ENCODE measurements at regions of chr21 and their contacts with region 1.

Region 1: DNA sequence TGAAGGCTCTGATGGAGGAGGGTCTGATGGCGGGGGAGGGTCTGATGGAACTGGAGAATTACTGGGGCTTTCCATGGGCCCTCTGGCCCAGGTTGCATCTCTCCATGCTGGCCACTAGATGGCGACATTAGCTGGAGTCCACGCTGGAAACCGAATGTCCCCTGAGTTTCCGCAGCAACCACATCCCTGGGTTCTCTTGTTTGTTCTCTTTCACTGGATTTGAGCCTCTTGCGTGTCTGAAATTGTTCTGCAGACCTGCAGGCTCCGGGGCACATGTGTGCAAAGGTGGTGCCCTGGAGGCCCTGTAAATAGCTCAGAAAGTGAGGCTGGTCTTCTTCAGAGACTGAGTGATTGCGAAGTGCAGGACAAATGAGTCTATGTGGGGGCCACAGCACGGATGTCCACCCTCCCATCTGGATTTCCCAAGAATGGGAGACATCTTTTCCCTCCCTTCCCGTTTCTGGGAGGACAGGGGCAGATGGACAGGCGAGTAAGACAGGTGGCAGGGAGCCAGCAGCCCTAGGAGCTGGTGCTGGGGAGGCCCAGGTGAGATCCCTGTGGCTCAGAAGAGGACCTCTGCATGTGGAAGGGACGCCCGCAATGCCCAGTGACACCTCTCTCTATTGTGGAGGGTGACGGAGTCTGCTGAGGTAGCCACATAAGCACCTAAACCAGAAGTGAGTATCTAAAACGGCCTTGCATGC is 73.2 kb upstream of the ABCG1 start:
- DNase-seq: peak; percentile 53 to 66 (median 62)
- ATAC-seq: peak; percentile 77
- H3K4me3 ChIP-seq: no peak overlapping the region
- H3K27ac ChIP-seq: no peak overlapping the region
- H3K4me1 ChIP-seq: peaks cover 3% of the 10 kb centered on the region
- H3K27me3 ChIP-seq: no peaks in the 10 kb centered on the region
- CTCF ChIP-seq: peak; percentile 87 to 95 (median 91)
- POLR2A ChIP-seq: no peak

Region 2: GRCh38 chr21:42258153-42258884 is 112.6 kb after region 1 on chr21:
- intact Hi-C with region 1: loop called (anchors 5 kb)
- DNase-seq: peak; percentile 70 to 83 (median 75)
- ATAC-seq: peak; percentile 59
- H3K4me3 ChIP-seq: no peak overlapping the region
- H3K27ac ChIP-seq: no peak overlapping the region
- H3K4me1 ChIP-seq: peaks cover 18% of the 10 kb centered on the region
- H3K27me3 ChIP-seq: no peaks in the 10 kb centered on the region
- CTCF ChIP-seq: peak; percentile 72 to 84 (median 77)
- POLR2A ChIP-seq: no peak

Region 3: DNA sequence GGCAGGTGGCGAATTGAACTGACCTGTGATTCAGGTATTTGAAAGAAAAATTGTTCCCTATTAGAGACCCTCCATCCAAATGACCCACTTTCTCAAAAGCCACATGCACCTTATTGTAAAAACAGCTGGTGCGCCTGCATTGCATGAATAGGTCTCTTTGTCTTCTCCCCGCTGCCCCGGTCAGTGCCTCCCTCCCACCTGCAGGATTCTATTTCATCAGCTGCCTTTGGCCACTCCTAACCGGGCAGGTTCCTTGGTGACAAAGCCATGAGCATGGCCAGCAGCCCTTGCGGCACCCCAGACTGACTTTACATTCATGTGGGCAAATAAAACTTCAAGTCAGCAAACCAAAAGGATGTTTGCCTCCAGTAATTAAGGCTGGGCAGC is 243.7 kb after region 1 on chr21:
- intact Hi-C with region 1: no loop called
- DNase-seq: peak; percentile 54 to 81 (median 72)
- ATAC-seq: peak; percentile 84
- H3K4me3 ChIP-seq: no peak overlapping the region
- H3K27ac ChIP-seq: peak overlapping the region; percentile 80 to 89 (median 86)
- H3K4me1 ChIP-seq: peaks cover 15% of the 10 kb centered on the region
- H3K27me3 ChIP-seq: no peaks in the 10 kb centered on the region
- CTCF ChIP-seq: peak in 3 of 7 experiments; percentile 11 to 18 (median 12)
- POLR2A ChIP-seq: no peak

Measured in body of pancreas (tissue), 4 donors.